ENCODE measurements at regions of chr3 and their contacts with region 1.

Region 1: DNA sequence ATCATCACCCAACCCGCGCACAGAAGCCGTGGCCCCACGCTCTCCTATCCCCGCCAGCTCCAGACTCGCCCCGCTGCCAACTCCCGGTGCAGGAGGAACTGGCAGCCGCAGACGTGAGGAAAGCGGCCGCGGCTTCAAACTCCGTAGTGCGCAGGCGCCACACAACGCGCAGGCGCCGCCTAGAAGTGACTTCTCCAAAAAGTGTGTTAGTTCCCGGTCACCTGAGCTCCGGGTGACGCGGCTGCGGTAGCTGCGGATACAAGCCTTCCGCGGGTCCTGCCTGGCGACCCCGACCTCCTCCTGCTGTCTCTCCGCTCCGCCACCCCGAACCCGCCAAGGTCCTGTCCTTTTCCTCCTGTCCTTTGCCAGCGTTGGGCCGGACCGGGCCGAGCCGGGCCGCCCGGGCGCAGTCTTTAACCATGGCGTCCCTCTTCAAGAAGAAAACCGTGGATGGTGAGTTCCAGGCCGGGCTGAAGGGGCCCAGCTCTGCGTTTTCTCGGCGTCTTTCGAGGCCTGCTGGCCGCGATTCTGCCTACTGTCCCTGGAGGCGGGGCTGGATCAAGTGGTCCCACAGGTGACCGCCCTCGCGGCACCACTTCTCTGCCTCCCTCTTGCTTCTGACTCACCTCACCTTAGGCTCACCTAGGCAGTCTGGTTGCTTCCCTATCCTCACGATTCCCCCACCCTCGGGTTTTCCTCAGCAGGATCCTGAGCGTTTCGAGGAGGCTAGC is at the start of gene CHMP2B:
- DNase-seq: peak; percentile 86 to 91 (median 89)
- ATAC-seq: peak; percentile 94
- H3K4me3 ChIP-seq: peak within 1 kb of the TSS; percentile 81
- H3K4me3 Mint-ChIP-seq: peak within 1 kb of the TSS; percentile 91 to 99 (median 98)
- H3K27ac ChIP-seq: peak within 1 kb of the TSS; percentile 95
- H3K27ac Mint-ChIP-seq: peak within 1 kb of the TSS; percentile 96 to 99 (median 98)
- H3K4me1 ChIP-seq: peaks cover 12 to 17% of the 10 kb centered on the region in 2 donors
- H3K4me1 Mint-ChIP-seq: peaks cover 26 to 61% (median 42%) of the 10 kb centered on the region in 7 donors
- H3K27me3 ChIP-seq: no peaks in the 10 kb centered on the region
- H3K27me3 Mint-ChIP-seq: peaks cover 7 to 28% (median 8%) of the 10 kb centered on the region in 5 donors
- total RNA-seq, gene CHMP2B: 20.7 to 27.4 (median 23.4) TPM

Region 2: DNA sequence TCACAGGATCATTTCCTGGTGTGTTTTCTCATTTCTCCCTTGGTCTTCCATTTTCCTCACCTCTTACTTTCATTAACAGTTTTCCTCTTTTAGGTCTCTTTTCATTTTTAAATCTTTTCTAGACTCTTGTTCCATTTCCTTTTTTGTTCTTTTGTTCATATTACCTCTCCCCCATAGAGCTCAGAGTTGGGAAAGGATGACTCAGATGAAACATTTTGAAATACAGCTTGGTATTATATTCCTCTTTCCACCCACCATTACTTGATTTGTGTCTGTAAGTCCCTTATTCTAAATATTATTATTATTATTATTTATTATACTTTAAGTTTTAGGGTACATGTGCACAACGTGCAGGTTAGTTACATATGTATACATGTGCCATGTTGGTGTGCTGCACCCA is 389.4 kb before region 1 on chr3:
- CTCF ChIA-PET with region 1: no interaction called
- POLR2A ChIA-PET with region 1: no interaction called
- intact Hi-C with region 1: no loop called
- DNase-seq: no peak
- ATAC-seq: no peak
- H3K4me3 ChIP-seq: no peak overlapping the region
- H3K4me3 Mint-ChIP-seq: no peak overlapping the region
- H3K27ac ChIP-seq: no peak overlapping the region
- H3K27ac Mint-ChIP-seq: no peak overlapping the region
- H3K4me1 ChIP-seq: no peaks in the 10 kb centered on the region
- H3K4me1 Mint-ChIP-seq: no peaks in the 10 kb centered on the region
- H3K27me3 ChIP-seq: no peaks in the 10 kb centered on the region
- H3K27me3 Mint-ChIP-seq: peaks cover 0 to 3% (median 0%) of the 10 kb centered on the region in 5 donors

Region 3: GRCh38 chr3:87247430-87247773 is 20.1 kb after region 1 on chr3:
- CTCF ChIA-PET with region 1: no interaction called
- POLR2A ChIA-PET with region 1: interaction called, 3 read pairs
- intact Hi-C with region 1: loop called in 1 of 2 experiments (anchors 2 kb)
- DNase-seq: no peak
- ATAC-seq: no peak
- H3K4me3 ChIP-seq: no peak overlapping the region
- H3K4me3 Mint-ChIP-seq: no peak overlapping the region
- H3K27ac ChIP-seq: no peak overlapping the region
- H3K27ac Mint-ChIP-seq: no peak overlapping the region
- H3K4me1 ChIP-seq: no peaks in the 10 kb centered on the region
- H3K4me1 Mint-ChIP-seq: peaks cover 0 to 24% (median 14%) of the 10 kb centered on the region in 7 donors
- H3K27me3 ChIP-seq: no peaks in the 10 kb centered on the region
- H3K27me3 Mint-ChIP-seq: no peaks in the 10 kb centered on the region

Region 4: GRCh38 chr3:88031642-88032077 is 804.4 kb after region 1 on chr3:
- CTCF ChIA-PET with region 1: no interaction called
- POLR2A ChIA-PET with region 1: no interaction called
- intact Hi-C with region 1: loop called in 1 of 2 experiments (anchors 1 kb)
- DNase-seq: peak in 7 of 9 donors; percentile 29 to 54 (median 38)
- ATAC-seq: peak; percentile 76
- H3K4me3 ChIP-seq: peak overlapping the region; percentile 59
- H3K4me3 Mint-ChIP-seq: peak overlapping the region; percentile 78 to 91 (median 86)
- H3K27ac ChIP-seq: peak overlapping the region; percentile 66
- H3K27ac Mint-ChIP-seq: peak overlapping the region; percentile 82 to 95 (median 88)
- H3K4me1 ChIP-seq: peaks cover 11 to 17% of the 10 kb centered on the region in 2 donors
- H3K4me1 Mint-ChIP-seq: peaks cover 10 to 50% (median 48%) of the 10 kb centered on the region in 7 donors
- H3K27me3 ChIP-seq: no peaks in the 10 kb centered on the region
- H3K27me3 Mint-ChIP-seq: peaks cover 0 to under 1% (median 0%) of the 10 kb centered on the region in 5 donors

Region 5: DNA sequence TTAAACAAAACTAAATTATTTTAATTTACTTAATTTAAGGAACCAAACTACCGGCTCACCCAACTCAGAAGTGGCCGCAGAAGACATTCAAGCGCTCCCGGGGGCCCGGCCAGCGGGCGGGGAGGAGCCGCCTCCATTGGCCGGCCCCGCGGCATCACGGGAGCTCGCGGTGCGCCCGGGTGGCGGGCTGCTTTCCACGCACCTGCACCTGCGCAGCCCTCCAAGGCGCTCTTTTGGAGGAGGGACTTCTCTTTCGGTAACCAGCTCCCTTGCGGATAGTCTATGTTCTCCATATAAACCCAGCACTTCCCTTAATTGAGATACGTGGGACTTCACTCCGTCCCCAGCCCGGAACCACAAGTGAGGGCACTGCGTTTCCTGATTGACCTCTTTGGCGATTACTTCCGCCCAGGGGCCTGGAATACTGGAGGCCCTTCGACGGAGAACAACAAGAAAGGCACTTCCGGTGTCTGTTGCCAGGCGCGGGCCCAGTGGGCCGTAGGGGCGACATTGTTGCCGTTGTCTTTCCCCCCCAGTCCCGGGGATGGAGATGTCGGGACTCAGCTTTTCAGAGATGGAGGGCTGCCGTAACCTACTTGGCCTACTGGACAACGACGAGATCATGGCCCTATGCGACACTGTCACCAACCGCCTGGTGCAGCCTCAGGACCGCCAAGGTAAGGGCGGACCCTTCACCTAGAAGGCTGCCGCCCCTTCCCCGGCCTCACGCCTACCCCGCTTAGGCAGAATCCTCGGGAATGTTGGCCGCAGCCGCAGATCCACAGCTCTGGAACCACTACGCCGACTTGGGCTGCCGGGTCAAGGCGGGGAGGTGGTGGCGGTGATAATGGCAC is 922.5 kb after region 1 on chr3 and contains the start of gene C3orf38:
- CTCF ChIA-PET with region 1: interaction called, 5 read pairs
- POLR2A ChIA-PET with region 1: interaction called, 4 read pairs
- intact Hi-C with region 1: loop called (anchors 1 to 2 kb)
- DNase-seq: peak; percentile 74 to 88 (median 85)
- ATAC-seq: peak; percentile 96
- H3K4me3 ChIP-seq: peak within 1 kb of the TSS; percentile 88
- H3K4me3 Mint-ChIP-seq: peak within 1 kb of the TSS; percentile 93 to 99 (median 98)
- H3K27ac ChIP-seq: peak within 1 kb of the TSS; percentile 94
- H3K27ac Mint-ChIP-seq: peak within 1 kb of the TSS; percentile 97 to 99 (median 99)
- H3K4me1 ChIP-seq: peaks cover 13 to 17% of the 10 kb centered on the region in 2 donors
- H3K4me1 Mint-ChIP-seq: peaks cover 16 to 46% (median 43%) of the 10 kb centered on the region in 7 donors
- H3K27me3 ChIP-seq: no peaks in the 10 kb centered on the region
- H3K27me3 Mint-ChIP-seq: no peaks in the 10 kb centered on the region
- total RNA-seq, gene C3orf38: 28.9 to 40.2 (median 34.7) TPM

Measured in naive thymus-derived CD4-positive, alpha-beta T cell (primary cell).